Activated CD4-positive, alpha-beta memory T cell treated with anti-CD3 and anti-CD28 coated beads for 36 hours (primary cell): ENCODE measurements at regions of chr6 and their contacts with region 1.

Region 1: GRCh38 chr6:142784344-142784743 is 160.6 kb downstream of the HIVEP2 start:
- DNase-seq: no peak
- H3K4me3 Mint-ChIP-seq: no peak overlapping the region
- H3K27ac Mint-ChIP-seq: peak overlapping the region; percentile 36
- H3K4me1 Mint-ChIP-seq: peaks cover 67% of the 10 kb centered on the region
- H3K27me3 Mint-ChIP-seq: no peaks in the 10 kb centered on the region

Region 2: GRCh38 chr6:142773859-142774648 is 10.3 kb before region 1 on chr6:
- CTCF ChIA-PET with region 1: interaction called, 5 read pairs
- POLR2A ChIA-PET with region 1: interaction called, 3 read pairs
- intact Hi-C with region 1: loop called (anchors 1 kb)
- DNase-seq: peak; percentile 56
- H3K4me3 Mint-ChIP-seq: peak overlapping the region; percentile 62
- H3K27ac Mint-ChIP-seq: peak overlapping the region; percentile 93
- H3K4me1 Mint-ChIP-seq: peaks cover 62% of the 10 kb centered on the region
- H3K27me3 Mint-ChIP-seq: no peaks in the 10 kb centered on the region